ENCODE measurements at regions of chr3 and their contacts with region 1.

Region 1: GRCh38 chr3:127574880-127575878 is 15.4 kb downstream of the TPRA1 start:
- DNase-seq: peak; percentile 82
- H3K4me3 Mint-ChIP-seq: no peak overlapping the region
- H3K27ac Mint-ChIP-seq: peak overlapping the region; percentile 28
- H3K4me1 Mint-ChIP-seq: peaks cover 7% of the 10 kb centered on the region
- H3K27me3 Mint-ChIP-seq: no peaks in the 10 kb centered on the region

Region 2: DNA sequence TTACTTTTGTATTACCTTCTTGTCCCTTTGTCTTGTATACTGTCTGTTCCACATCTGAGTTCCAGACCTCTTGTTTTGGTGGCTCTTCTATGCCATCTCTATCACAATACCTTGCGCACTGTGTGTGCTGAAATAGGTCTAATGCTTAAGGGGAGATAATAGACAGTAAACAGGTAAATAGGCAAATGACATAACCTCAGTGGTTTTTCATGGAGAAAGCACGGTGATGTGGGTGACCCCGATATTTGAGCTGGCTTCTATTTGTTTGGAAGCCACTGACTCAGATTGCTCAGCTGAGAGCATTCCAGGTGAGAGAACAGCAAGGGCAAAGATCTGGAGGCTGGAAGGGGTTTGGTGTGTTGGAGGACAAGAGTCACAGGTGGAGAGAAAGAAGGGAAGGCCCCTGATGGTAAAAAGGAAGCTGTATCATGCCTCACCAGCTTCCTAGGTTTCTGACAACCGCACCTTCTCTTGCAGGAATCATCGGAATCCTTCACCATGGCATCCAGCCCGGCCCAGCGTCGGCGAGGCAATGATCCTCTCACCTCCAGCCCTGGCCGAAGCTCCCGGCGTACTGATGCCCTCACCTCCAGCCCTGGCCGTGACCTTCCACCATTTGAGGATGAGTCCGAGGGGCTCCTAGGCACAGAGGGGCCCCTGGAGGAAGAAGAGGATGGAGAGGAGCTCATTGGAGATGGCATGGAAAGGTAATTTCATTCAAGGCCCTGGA is 23.8 kb after region 1 on chr3:
- intact Hi-C with region 1: loop called (anchors 1 kb)
- DNase-seq: no peak
- H3K4me3 Mint-ChIP-seq: peak overlapping the region; percentile 100
- H3K27ac Mint-ChIP-seq: peak overlapping the region; percentile 99
- H3K4me1 Mint-ChIP-seq: peaks cover 45% of the 10 kb centered on the region
- H3K27me3 Mint-ChIP-seq: no peaks in the 10 kb centered on the region

Region 3: GRCh38 chr3:127697551-127698240 is 122.5 kb after region 1 on chr3:
- intact Hi-C with region 1: loop called (anchors 1 kb)
- DNase-seq: peak; percentile 38
- H3K4me3 Mint-ChIP-seq: no peak overlapping the region
- H3K27ac Mint-ChIP-seq: no peak overlapping the region
- H3K4me1 Mint-ChIP-seq: no peaks in the 10 kb centered on the region
- H3K27me3 Mint-ChIP-seq: peaks cover 4% of the 10 kb centered on the region

Region 4: GRCh38 chr3:127831723-127832172 is 256.6 kb after region 1 on chr3:
- intact Hi-C with region 1: loop called (anchors 1 kb)
- DNase-seq: no peak
- H3K4me3 Mint-ChIP-seq: no peak overlapping the region
- H3K27ac Mint-ChIP-seq: no peak overlapping the region
- H3K4me1 Mint-ChIP-seq: no peaks in the 10 kb centered on the region
- H3K27me3 Mint-ChIP-seq: peaks cover 5% of the 10 kb centered on the region

Region 5: DNA sequence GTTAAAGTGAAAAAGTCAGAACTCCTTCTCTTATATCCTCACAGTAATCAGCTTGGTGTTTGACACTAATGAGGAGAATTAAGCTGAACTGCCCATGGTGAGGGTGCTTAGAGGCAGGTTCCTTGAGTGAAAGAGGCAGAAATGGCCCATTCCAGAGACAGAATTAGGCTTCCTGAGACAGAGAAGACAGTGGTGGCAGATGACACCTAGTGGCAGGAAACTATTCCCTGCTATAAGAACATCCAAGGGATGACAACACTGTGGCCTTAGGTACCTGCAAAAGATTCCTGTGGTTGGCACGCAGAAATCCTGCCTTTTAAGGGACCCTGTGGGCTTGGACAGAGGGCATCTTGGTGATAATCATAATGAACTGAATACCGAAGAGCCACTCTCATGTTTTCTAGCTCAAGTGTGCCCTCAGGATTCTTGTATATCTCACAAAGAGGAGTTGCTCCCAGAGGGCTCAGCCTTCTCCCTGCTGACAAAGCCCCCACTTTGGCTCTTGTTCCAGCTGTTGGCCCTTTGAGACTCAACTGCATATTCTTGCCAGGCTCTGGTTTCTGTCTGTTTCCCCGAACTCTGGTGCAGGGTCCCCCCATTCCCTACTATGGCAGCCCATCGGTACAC is 395.9 kb after region 1 on chr3:
- intact Hi-C with region 1: loop called (anchors 1 kb)
- DNase-seq: no peak
- H3K4me3 Mint-ChIP-seq: no peak overlapping the region
- H3K27ac Mint-ChIP-seq: no peak overlapping the region
- H3K4me1 Mint-ChIP-seq: no peaks in the 10 kb centered on the region
- H3K27me3 Mint-ChIP-seq: peaks cover 38% of the 10 kb centered on the region